Cardiac septum (tissue), 1 donor: ENCODE measurements at regions of chr11 and their contacts with region 1.

Region 1: GRCh38 chr11:65540297-65541092 is 15.6 kb downstream of the SCYL1 start:
- DNase-seq: peak; percentile 97

Region 2: GRCh38 chr11:65477149-65477965 is 63.1 kb before region 1 on chr11:
- intact Hi-C with region 1: no loop called
- DNase-seq: peak; percentile 99

Region 3: DNA sequence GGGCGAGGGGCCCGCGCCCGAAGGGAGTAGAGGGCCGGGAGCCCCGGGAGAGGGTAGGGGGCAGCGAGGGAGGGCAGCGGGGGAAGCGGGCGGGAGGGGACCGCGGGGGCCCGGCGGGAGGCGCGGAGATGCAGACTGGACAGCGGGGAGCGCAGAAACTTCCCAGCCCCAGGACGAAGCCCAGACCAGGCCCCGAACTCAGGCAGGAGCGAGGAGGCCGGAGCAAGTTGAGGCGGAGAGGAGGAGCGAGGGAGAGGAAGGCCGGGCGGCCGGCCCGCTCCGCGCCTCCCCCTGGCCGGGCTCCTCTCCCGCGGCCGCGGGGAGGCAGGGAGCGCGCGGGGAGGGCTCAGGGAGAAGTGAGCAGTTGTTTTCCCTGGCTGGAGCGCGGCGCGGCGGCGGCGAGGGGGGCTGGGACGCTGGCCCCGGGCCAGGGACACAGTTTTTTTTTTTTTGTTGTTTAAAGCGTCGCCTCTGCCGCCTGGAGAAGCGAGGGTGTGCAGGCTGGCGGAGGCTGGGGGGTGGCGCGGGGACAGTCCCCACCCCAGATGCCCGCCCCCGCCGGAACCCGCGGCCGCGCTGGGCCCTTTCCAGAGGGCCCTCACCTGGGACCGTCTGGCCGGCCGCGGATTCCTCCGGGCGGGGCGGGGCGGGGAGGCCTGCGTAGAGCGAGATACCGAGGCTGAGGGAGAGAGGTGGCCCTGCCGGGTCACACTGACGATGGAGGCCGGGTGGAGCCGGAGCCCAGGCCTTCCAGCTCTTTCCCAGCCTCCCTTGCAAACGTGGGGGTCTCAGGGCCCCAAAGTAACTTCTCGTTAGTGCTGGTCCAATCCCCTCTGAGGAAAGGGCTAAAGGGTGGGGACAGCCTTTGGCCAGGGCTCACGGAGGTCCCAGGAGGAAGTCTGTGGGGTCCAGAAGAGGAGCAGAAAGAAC is 17.8 kb after region 1 on chr11 and contains the start of gene LTBP3:
- intact Hi-C with region 1: loop called (anchors 2 kb)
- DNase-seq: peak; percentile 84
- total RNA-seq, gene LTBP3: 148 TPM

Region 4: GRCh38 chr11:65588199-65589054 is 47.9 kb after region 1 on chr11:
- intact Hi-C with region 1: loop called (anchors 5 kb)
- DNase-seq: no peak